ENCODE measurements at regions of chr11 and their contacts with region 1.

Region 1: DNA sequence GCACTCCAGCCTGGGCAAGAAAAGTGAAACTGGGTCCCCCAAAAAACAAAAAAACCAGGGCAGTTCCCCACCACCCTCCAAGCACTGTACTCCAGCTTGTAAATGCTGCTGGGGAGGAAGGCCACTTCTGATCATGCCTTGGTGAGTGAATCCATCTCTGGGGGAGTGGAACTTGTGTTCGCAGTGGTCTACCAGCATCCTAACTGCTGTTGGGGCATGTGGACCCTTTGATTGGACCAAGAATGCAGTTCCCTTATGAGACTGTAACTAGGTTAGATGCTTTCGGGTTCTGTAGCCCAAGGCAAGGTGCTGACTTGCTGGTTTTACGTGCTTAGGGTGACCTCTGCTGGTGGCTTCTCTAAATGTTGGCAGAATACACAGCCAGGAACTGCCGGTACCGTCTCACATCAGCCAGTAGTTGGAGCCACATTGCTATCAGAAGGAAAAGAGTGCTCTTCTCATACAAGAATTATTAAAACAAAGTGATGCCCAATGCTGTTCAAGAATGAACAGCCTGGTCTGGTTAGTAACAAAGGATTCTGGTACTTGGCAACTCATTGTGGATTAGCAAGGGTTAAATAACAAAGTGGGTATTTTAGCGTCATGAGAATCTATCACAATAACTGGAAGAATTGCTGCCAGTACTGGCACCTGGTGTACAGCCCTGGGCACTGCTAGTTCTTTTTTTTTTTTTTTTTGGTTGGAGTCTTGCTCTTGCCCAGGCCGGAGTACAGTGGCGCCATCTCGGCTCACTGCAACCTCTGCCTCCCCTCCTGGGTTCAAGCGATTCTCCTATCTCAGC is 13.0 kb downstream of the EIF1AD start:
- DNase-seq: peak; percentile 75 to 96 (median 82)
- ATAC-seq: peak; percentile 100
- H3K4me3 ChIP-seq: no peak overlapping the region
- H3K27ac ChIP-seq: no peak overlapping the region
- H3K4me1 ChIP-seq: 0 out of 5 replicates have a peak, but pooled peaks cover 0 to 3% of the 10 kb centered on the region in 2 experiments
- H3K27me3 ChIP-seq: no peaks in the 10 kb centered on the region
- CTCF ChIP-seq: peak; percentile 99 to 100 (median 99)
- EP300 ChIP-seq: peak; percentile 29; the same call in 1 of the 2 replicates
- POLR2A ChIP-seq: no peak
- RAD21 ChIP-seq: peak; percentile 99

Region 2: GRCh38 chr11:65779851-65780577 is 209.0 kb before region 1 on chr11:
- CTCF ChIA-PET with region 1: interaction called, 3 read pairs
- POLR2A ChIA-PET with region 1: no interaction called
- in situ Hi-C with region 1: no loop called
- intact Hi-C with region 1: loop called (anchors 10 kb)
- DNase-seq: peak; percentile 84 to 92 (median 87)
- ATAC-seq: peak; percentile 92
- H3K4me3 ChIP-seq: peak overlapping the region; percentile 86
- H3K27ac ChIP-seq: peak overlapping the region; percentile 95
- H3K4me1 ChIP-seq: peaks cover 7 to 48% of the 10 kb centered on the region in 2 experiments; a peak in 4 of 5 replicates
- H3K27me3 ChIP-seq: no peaks in the 10 kb centered on the region
- CTCF ChIP-seq: peak; percentile 96 to 100 (median 99)
- EP300 ChIP-seq: no peak
- POLR2A ChIP-seq: peak; percentile 85
- RAD21 ChIP-seq: peak; percentile 86 to 90

Region 3: DNA sequence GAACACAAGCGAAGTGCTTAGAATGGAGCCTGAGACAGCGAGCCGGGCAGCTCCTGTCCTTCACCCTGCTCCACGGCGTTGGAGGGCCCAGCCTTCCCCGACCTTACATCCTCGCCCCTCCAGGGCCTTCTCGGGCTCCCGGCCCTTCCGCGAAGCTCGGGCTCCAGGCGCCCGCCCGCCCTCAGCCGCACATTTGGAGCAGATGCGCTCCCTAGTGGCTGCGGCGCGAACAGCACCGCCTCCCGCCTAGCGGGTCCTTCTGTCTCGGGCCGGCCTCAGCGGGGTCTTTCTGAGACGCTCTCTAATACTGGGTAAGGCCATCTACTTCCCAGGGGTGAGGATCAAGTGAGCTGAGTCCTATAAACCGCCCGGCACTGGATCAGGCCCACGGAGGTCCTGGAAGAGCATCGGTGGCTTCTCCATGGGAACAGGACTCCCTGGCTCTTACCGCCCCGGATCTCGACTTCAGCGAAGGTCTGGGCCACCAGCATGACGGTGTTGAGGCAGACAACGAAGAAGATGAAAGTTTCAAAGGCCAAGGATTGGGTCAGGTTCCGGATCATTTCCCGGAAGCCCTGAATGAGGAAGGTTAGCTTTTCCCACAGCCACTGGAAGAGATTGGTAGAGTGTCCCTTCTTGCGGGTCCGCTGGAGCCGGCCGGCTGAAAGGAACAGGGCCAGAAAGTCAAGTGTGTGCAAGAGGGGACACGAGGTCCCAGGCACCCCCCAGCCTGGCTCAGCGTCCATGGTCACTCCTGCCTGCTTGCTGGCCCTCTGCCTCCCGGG is 33.6 kb after region 1 on chr11:
- CTCF ChIA-PET with region 1: interaction called, 6 read pairs
- POLR2A ChIA-PET with region 1: no interaction called
- in situ Hi-C with region 1: no loop called
- intact Hi-C with region 1: loop called (anchors 1 kb)
- DNase-seq: peak; percentile 87 to 90 (median 90)
- ATAC-seq: peak; percentile 94
- H3K4me3 ChIP-seq: peak overlapping the region; percentile 26; the same call in 1 of the 2 replicates
- H3K27ac ChIP-seq: no peak overlapping the region; the same call in 2 of the 3 replicates
- H3K4me1 ChIP-seq: peaks cover 13 to 53% of the 10 kb centered on the region in 2 experiments
- H3K27me3 ChIP-seq: no peaks in the 10 kb centered on the region
- CTCF ChIP-seq: peak; percentile 93 to 96 (median 94)
- EP300 ChIP-seq: no peak
- POLR2A ChIP-seq: no peak
- RAD21 ChIP-seq: peak; percentile 78 to 87

Region 4: DNA sequence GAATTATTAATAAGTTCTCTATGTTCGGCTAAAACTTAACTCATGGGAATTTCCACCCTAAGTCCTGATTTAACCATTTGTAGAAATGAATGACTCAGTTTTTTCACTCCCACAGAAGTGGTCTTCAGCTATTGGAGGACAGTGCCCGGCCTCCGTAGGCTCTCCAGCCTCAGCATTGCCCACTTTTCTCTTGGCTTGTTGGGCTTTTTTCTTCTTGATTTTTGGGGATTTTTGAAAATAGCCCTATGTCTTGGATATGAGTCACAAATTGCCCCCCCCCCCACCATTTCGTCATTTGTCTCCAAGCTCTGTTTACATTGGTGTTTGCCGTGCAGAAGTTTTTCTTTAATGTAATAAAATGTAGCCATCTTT is 147.7 kb after region 1 on chr11:
- CTCF ChIA-PET with region 1: interaction called, 7 read pairs
- POLR2A ChIA-PET with region 1: no interaction called
- in situ Hi-C with region 1: no loop called
- intact Hi-C with region 1: loop called (anchors 1 kb)
- DNase-seq: no peak
- ATAC-seq: no peak
- H3K4me3 ChIP-seq: no peak overlapping the region
- H3K27ac ChIP-seq: no peak overlapping the region
- H3K4me1 ChIP-seq: peaks cover 4 to 6% of the 10 kb centered on the region in 2 experiments; a peak in 4 of 5 replicates
- H3K27me3 ChIP-seq: no peaks in the 10 kb centered on the region
- CTCF ChIP-seq: no peak
- EP300 ChIP-seq: no peak
- POLR2A ChIP-seq: no peak
- RAD21 ChIP-seq: no peak

Measured in K562 (cell line).